AG04450 (cell line): ENCODE measurements at regions of chr22 and their contacts with region 1.

Region 1: DNA sequence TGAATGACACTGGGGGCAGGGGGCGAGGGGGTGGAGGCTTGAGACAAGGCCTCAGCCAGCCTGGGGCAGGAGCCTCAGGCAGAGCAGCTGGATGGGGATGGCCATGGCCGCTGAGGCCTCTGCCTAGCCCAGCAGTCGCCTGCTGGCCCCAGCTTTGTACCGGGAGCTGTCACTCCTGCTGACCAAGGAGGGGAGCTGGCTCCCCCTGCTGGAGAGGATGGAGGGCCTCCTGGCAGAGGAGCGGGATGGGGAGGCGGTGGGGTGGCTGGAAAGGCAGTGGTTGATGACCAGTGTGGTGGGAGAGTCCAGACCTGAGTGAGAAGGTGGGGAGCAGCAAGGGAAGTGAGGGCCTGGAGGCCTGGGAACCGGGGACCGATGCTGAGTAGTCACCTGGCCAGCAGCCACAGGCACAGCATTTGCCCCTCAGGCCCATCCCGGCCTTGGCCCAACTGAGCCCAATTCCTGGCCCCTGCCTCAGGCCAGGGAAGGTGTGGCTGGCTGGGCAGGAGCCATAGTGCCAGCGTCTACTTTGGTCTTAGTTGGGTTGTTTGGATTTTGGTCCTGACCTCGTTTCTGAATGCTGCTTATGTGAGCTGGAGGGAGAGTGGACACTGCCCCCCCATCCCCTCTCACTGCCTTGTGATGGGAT is 6.0 kb upstream of the SUSD2 start:
- DNase-seq: peak; percentile 45
- H3K4me3 ChIP-seq: no peak overlapping the region
- H3K27ac ChIP-seq: no peak overlapping the region
- H3K27me3 ChIP-seq: no peaks in the 10 kb centered on the region
- CTCF ChIP-seq: peak; percentile 88

Region 2: DNA sequence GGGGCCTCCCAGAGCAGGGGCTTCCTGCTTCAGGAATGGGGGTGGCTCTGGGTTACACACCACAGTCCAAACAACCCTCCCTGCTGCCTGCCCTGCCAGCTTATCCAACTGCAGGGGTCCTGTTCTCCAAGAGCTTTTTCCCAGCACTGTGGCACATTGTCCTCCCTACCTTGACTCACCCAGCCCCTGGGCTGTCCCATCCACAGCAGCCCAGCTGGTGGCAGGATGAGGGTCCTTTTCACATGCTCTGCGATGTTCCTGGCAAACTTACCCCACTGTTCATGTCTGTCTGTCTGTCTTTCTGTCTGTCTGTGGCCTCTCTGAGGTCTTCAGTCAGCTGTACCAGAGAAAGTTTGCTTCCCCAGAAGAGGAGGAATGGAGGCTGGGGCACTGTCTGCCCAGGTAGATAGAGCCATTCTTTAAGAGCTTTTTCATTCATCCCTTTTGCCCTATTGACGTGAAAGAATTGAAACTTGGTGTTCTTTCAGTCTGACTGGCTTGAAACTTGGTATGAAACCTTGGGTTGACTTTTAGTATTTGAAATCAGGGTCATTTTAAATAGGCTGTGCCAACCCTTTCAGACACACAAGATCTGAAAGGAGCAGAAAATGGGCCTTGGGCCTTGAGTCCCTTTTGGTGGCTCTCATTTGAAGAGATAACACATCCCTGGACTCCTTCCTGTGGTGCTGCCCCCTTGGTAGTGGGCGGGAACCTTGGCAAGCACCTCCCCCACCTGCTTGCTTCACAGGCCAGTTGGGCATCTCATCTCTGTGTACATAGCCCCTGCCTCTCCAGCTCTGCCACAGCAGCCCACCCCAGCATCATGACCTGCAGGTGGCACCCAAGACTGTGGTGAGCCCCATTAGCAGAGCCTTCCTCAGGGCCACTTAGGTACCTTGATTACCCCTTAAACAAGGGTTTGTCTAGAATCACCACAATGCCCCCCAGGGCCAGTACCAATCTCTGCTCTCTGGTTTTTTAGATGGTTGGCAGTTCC is 68.6 kb before region 1 on chr22:
- CTCF ChIA-PET with region 1: interaction called, 33 read pairs
- POLR2A ChIA-PET with region 1: interaction called, 4 read pairs
- DNase-seq: no peak
- H3K4me3 ChIP-seq: no peak overlapping the region
- H3K27ac ChIP-seq: peak overlapping the region; percentile 39
- H3K27me3 ChIP-seq: no peaks in the 10 kb centered on the region
- CTCF ChIP-seq: peak; percentile 27

Region 3: GRCh38 chr22:24482575-24482974 is 307.3 kb after region 1 on chr22:
- CTCF ChIA-PET with region 1: no interaction called
- POLR2A ChIA-PET with region 1: no interaction called
- DNase-seq: no peak
- H3K4me3 ChIP-seq: no peak overlapping the region
- H3K27ac ChIP-seq: no peak overlapping the region
- H3K27me3 ChIP-seq: no peaks in the 10 kb centered on the region
- CTCF ChIP-seq: no peak